HCT116 (cell line): ENCODE measurements at regions of chr1 and their contacts with region 1.

Region 1: DNA sequence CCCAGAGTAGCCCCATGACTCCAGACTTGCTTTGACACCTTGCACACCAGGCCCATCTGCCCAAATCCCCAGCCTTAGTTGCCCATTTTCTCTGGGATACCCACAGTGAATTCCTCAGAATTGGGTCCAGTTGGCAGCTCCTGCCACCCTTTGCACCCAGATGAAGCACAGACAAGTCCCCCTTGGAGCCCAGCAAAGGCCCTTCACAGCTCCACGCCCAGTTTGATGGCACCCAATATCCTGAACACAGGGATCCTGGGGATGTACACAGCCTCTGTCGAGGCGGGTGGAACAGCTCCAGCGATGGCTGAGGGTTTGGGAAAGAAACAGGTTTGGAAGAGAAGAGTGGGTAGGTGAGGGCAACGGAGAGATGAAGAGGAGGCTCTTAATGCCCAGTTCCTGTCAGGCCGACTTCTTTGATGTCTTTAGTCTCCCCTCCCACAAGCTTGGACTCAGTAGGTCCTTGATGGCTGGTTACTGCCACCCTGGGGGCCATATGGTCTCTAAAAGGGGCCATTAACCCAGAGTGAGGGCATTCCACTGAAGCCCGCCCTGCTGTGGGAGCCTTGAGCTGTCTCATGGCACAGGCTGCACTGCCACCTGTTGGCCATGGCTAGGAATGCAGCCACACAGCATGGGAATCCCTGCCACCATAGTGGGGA is 21.7 kb downstream of the TMEM53 start:
- DNase-seq: no peak
- ATAC-seq: peak; percentile 90
- H3K4me3 ChIP-seq: no peak overlapping the region
- H3K27ac ChIP-seq: no peak overlapping the region
- H3K4me1 ChIP-seq: no peaks in the 10 kb centered on the region
- H3K27me3 ChIP-seq: no peaks in the 10 kb centered on the region
- CTCF ChIP-seq: peak; percentile 66 to 98 (median 96)
- POLR2A ChIP-seq: no peak
- RAD21 ChIP-seq: peak; percentile 85

Region 2: GRCh38 chr1:44103270-44104131 is 549.1 kb before region 1 on chr1:
- CTCF ChIA-PET with region 1: interaction called, 4 read pairs
- POLR2A ChIA-PET with region 1: no interaction called
- RAD21 ChIA-PET with region 1: no interaction called
- intact Hi-C with region 1: loop called (anchors 10 kb)
- DNase-seq: peak; percentile 18
- ATAC-seq: peak; percentile 53; the same call in 1 of the 2 replicates
- H3K4me3 ChIP-seq: no peak overlapping the region
- H3K27ac ChIP-seq: no peak overlapping the region
- H3K4me1 ChIP-seq: 0 out of 4 replicates have a peak, but pooled peaks cover 0 to 3% of the 10 kb centered on the region in 2 experiments
- H3K27me3 ChIP-seq: peaks cover 5% of the 10 kb centered on the region; the same call in 1 of the 2 replicates
- CTCF ChIP-seq: peak; percentile 38 to 66 (median 64); a peak in 5 of 6 replicates
- POLR2A ChIP-seq: no peak
- RAD21 ChIP-seq: peak; percentile 63

Region 3: GRCh38 chr1:44377925-44378784 is 274.4 kb before region 1 on chr1:
- CTCF ChIA-PET with region 1: interaction called, 18 read pairs
- POLR2A ChIA-PET with region 1: interaction called, 3 read pairs
- RAD21 ChIA-PET with region 1: interaction called, 6 to 7 read pairs
- intact Hi-C with region 1: loop called (anchors 1 kb)
- DNase-seq: peak; percentile 32
- ATAC-seq: peak; percentile 88
- H3K4me3 ChIP-seq: no peak overlapping the region
- H3K27ac ChIP-seq: no peak overlapping the region
- H3K4me1 ChIP-seq: no peaks in the 10 kb centered on the region
- H3K27me3 ChIP-seq: no peaks in the 10 kb centered on the region
- CTCF ChIP-seq: peak; percentile 80 to 86 (median 80)
- POLR2A ChIP-seq: no peak
- RAD21 ChIP-seq: peak; percentile 90

Region 4: DNA sequence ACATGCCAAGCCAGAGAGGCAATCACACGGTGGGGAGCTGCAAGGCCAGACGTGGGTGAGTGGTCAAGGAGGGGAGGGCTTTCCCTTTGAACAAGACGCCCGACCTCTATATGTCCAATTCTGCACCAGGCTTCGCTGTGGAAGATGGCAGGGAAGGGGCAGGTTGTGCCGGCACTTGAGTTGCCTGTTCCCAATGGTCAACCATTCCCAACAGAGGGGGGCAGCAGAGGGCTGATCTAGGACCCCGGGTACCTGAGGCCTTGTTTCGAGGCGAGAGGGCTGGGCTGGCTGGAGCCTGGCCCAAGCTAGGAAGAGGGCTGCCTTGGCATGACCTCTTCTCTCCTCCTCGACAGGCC is 43.2 kb before region 1 on chr1:
- CTCF ChIA-PET with region 1: interaction called, 5 read pairs
- POLR2A ChIA-PET with region 1: no interaction called
- RAD21 ChIA-PET with region 1: no interaction called
- intact Hi-C with region 1: loop called (anchors 2 kb)
- DNase-seq: peak; percentile 10
- ATAC-seq: peak; percentile 82
- H3K4me3 ChIP-seq: no peak overlapping the region
- H3K27ac ChIP-seq: no peak overlapping the region
- H3K4me1 ChIP-seq: peaks cover 0 to under 1% of the 10 kb centered on the region in 2 experiments; a peak in 2 of 4 replicates
- H3K27me3 ChIP-seq: no peaks in the 10 kb centered on the region
- CTCF ChIP-seq: peak; percentile 18 to 46 (median 36); a peak in 3 of 6 replicates
- POLR2A ChIP-seq: no peak
- RAD21 ChIP-seq: peak; percentile 59

Region 5: GRCh38 chr1:44664730-44665370 is 12.3 kb after region 1 on chr1:
- CTCF ChIA-PET with region 1: interaction called, 10 read pairs
- POLR2A ChIA-PET with region 1: no interaction called
- RAD21 ChIA-PET with region 1: no interaction called
- intact Hi-C with region 1: no loop called
- DNase-seq: no peak
- ATAC-seq: no peak
- H3K4me3 ChIP-seq: no peak overlapping the region
- H3K27ac ChIP-seq: no peak overlapping the region
- H3K4me1 ChIP-seq: no peaks in the 10 kb centered on the region
- H3K27me3 ChIP-seq: no peaks in the 10 kb centered on the region
- CTCF ChIP-seq: no peak
- POLR2A ChIP-seq: no peak
- RAD21 ChIP-seq: no peak

Region 6: DNA sequence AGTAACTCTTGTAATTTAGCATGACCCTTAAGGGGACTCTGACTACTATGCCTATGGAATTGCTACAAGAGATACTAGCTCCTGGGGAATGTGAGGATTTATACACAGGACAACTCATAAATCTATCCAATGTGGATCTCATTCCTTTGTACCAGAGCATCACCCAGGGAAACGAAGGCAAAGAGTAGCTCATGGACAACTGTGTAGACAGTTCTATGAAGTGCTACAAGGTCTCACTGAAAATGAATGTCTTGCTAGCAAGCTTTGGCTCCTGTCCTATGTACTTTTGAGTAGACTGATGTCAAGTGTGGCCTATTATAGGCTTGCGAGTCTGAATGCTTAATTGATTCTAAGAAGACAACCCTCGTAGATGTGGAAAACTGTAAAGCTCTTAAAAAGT is 460.1 kb after region 1 on chr1:
- CTCF ChIA-PET with region 1: no interaction called
- POLR2A ChIA-PET with region 1: no interaction called
- RAD21 ChIA-PET with region 1: no interaction called
- intact Hi-C with region 1: no loop called
- DNase-seq: no peak
- ATAC-seq: no peak
- H3K4me3 ChIP-seq: no peak overlapping the region
- H3K27ac ChIP-seq: no peak overlapping the region
- H3K4me1 ChIP-seq: no peaks in the 10 kb centered on the region
- H3K27me3 ChIP-seq: no peaks in the 10 kb centered on the region
- CTCF ChIP-seq: no peak
- POLR2A ChIP-seq: no peak
- RAD21 ChIP-seq: no peak